Gastrocnemius medialis (tissue), 4 donors: ENCODE measurements at regions of chr4 and their contacts with region 1.

Region 1: GRCh38 chr4:152535903-152536544 is at the start of gene FBXW7:
- DNase-seq: peak; percentile 96 to 98
- ATAC-seq: peak; percentile 95 to 96
- H3K4me3 ChIP-seq: peak within 1 kb of the TSS; percentile 80 to 99 (median 96)
- H3K27ac ChIP-seq: peak within 1 kb of the TSS; percentile 84 to 95 (median 92)
- H3K4me1 ChIP-seq: peaks cover 40 to 53% of the 10 kb centered on the region in 2 donors
- H3K27me3 ChIP-seq: no peaks in the 10 kb centered on the region
- CTCF ChIP-seq: no peak
- POLR2A ChIP-seq: peak; percentile 80 to 87
- total RNA-seq, gene FBXW7: 23.5 to 40.8 (median 28.8) TPM

Region 2: DNA sequence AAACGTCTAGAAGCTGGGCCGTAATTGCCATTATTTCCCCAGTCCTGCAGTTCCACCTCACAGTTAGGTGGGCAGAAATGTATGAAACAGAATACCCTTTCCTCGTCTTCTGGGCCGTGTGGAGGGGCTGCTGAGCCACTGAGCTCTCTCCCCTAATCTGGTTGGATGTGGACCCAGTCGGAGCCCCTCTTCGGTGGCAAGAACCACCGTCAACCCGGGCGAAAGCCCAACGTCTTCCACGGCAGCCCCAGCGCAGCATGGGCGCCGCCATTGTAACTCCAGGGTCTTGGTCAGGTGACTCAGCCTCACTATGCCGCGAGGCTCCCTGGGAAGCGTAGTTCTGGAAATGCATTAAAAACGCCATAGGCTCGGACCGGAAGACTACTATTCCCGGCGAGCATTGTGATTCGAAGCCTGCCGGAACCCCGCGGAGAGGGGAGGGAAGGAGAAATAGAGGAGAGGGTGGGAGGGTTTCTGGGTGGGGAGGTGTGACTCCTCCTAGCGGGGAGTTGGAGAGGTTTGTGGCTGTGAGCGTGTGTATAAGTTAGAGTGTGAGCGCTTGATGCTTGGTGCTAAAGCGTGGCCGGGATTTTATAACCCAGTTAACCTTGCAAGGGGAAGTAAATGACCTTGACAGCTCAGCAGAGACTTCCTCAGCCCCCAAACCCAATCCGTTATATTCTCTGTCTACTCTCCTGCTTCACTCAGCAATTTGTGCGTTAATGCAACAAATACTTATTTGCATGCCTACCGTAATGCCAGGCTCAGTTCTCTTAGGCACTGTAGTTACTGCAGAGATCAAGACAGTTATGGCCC is 775.1 kb before region 1 on chr4 and contains the start of gene GATB:
- in situ Hi-C with region 1: no loop called
- intact Hi-C with region 1: loop called (anchors 2 kb)
- DNase-seq: peak; percentile 91 to 92
- ATAC-seq: peak; percentile 100
- H3K4me3 ChIP-seq: peak within 1 kb of the TSS; percentile 83 to 95 (median 92)
- H3K27ac ChIP-seq: peak within 1 kb of the TSS; percentile 72 to 88 (median 81)
- H3K4me1 ChIP-seq: peaks cover 7 to 11% of the 10 kb centered on the region in 2 donors
- H3K27me3 ChIP-seq: no peaks in the 10 kb centered on the region
- CTCF ChIP-seq: peak in 3 of 5 experiments; percentile 38 to 63 (median 52)
- POLR2A ChIP-seq: peak; percentile 48 to 55
- total RNA-seq, gene GATB: 18.7 to 34.0 (median 27.6) TPM

Region 3: GRCh38 chr4:152690706-152691651 is 155.0 kb after region 1 on chr4:
- in situ Hi-C with region 1: no loop called
- intact Hi-C with region 1: loop called (anchors 5 kb)
- DNase-seq: peak; percentile 24 to 48
- ATAC-seq: peak; percentile 93 to 97
- H3K4me3 ChIP-seq: no peak overlapping the region
- H3K27ac ChIP-seq: peak overlapping the region; percentile 64 to 89 (median 86)
- H3K4me1 ChIP-seq: peaks cover 42 to 59% of the 10 kb centered on the region in 2 donors
- H3K27me3 ChIP-seq: no peaks in the 10 kb centered on the region
- CTCF ChIP-seq: no peak
- POLR2A ChIP-seq: peak in 1 of 2 donors; percentile 20